SK-N-SH (cell line): ENCODE measurements at regions of chr12 and their contacts with region 1.

Region 1: GRCh38 chr12:70590051-70590450 is 47.2 kb downstream of the PTPRB start:
- DNase-seq: peak; percentile 65
- H3K4me3 ChIP-seq: no peak overlapping the region; a peak in 1 of 4 replicates
- H3K27ac ChIP-seq: no peak overlapping the region
- H3K4me1 ChIP-seq: no peaks in the 10 kb centered on the region
- H3K27me3 ChIP-seq: no peaks in the 10 kb centered on the region
- CTCF ChIP-seq: peak; percentile 93
- EP300 ChIP-seq: no peak
- RAD21 ChIP-seq: peak; percentile 80

Region 2: DNA sequence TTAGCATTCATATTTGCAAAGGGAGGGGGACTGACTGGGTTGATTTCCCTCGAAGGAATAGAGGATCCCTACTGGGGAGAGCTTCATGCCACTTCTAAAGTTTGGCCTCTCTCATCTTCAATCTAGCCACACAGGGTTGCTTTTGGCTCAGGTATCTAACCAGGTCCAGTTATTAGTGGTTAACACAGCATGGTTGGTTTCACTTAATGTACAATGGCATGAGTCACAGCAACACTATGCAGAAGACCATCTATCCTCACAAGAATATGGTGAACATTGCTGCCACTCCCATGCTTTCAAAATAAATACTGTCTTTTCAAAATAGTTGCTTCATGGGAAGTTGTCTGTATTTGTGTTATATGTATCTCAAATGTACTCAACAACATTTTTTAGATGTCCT is 858.0 kb before region 1 on chr12:
- CTCF ChIA-PET with region 1: no interaction called
- POLR2A ChIA-PET with region 1: no interaction called
- DNase-seq: no peak
- H3K4me3 ChIP-seq: no peak overlapping the region
- H3K27ac ChIP-seq: no peak overlapping the region
- H3K4me1 ChIP-seq: no peaks in the 10 kb centered on the region
- H3K27me3 ChIP-seq: no peaks in the 10 kb centered on the region
- CTCF ChIP-seq: no peak
- EP300 ChIP-seq: no peak
- RAD21 ChIP-seq: no peak

Region 3: GRCh38 chr12:70529647-70530046 is 60.4 kb before region 1 on chr12:
- CTCF ChIA-PET with region 1: no interaction called
- POLR2A ChIA-PET with region 1: no interaction called
- DNase-seq: no peak
- H3K4me3 ChIP-seq: no peak overlapping the region
- H3K27ac ChIP-seq: no peak overlapping the region
- H3K4me1 ChIP-seq: no peaks in the 10 kb centered on the region
- H3K27me3 ChIP-seq: no peaks in the 10 kb centered on the region
- CTCF ChIP-seq: no peak
- EP300 ChIP-seq: no peak
- RAD21 ChIP-seq: no peak

Region 4: GRCh38 chr12:70571029-70571428 is 19.0 kb before region 1 on chr12:
- CTCF ChIA-PET with region 1: no interaction called
- POLR2A ChIA-PET with region 1: no interaction called
- DNase-seq: no peak
- H3K4me3 ChIP-seq: no peak overlapping the region
- H3K27ac ChIP-seq: no peak overlapping the region
- H3K4me1 ChIP-seq: no peaks in the 10 kb centered on the region
- H3K27me3 ChIP-seq: no peaks in the 10 kb centered on the region
- CTCF ChIP-seq: no peak
- EP300 ChIP-seq: no peak
- RAD21 ChIP-seq: no peak

Region 5: DNA sequence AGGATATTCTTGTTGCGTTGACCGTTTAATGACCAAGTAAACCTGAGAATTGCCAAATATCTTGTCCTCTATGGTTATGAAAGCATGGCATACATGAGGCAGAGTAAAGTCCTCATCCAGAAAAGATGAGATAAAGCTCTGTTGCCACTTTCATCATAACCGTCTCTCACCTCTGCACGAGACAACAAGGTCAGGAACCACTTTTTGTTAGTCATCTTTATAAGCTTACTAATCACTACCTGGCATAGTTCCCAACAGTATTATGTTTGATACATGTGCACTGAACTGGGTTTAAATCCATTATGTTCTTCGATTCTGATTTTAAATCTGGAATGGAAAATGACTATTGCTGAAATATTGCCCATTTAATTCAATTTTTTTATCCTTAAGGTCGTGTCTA is 15.9 kb after region 1 on chr12:
- CTCF ChIA-PET with region 1: interaction called, 12 read pairs
- POLR2A ChIA-PET with region 1: interaction called, 4 read pairs
- DNase-seq: no peak
- H3K4me3 ChIP-seq: no peak overlapping the region
- H3K27ac ChIP-seq: no peak overlapping the region
- H3K4me1 ChIP-seq: peaks cover 0 to 6% of the 10 kb centered on the region in 2 experiments; a peak in 3 of 4 replicates
- H3K27me3 ChIP-seq: no peaks in the 10 kb centered on the region
- CTCF ChIP-seq: no peak
- EP300 ChIP-seq: no peak
- RAD21 ChIP-seq: no peak

Region 6: DNA sequence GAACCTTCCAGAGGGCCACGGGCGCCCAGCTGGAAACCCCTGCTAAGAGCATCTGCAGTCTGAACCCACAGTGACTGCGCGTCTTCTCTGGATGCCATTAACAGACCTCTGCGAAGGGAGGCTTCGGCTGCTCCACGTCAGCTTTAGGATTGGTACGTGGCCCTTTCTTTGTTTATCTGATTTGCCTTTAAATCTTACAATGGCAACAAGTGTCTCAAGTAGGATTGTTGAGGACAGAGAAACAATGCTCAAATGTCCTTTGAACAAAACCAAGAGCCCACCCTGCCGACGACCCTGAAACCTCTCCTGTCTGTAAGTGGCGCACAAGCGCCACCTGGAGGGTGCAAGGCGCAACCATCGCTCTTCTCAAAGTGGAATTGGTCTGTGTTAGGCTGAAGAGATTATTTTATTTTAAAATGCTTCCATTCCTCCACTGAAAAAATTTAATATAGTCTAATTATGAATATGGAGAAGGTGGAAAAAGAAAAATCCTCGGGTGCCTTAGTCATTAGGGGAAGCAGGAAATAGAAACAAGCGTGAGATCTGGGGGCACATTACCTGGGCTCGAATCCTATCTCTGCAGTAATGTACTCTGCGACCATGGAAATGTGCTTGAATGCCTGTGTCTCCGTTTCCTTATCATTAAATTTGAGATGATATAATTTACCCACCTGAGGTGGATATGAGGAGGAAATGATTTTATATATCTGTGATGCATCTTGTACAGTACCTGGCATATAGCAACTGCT is 129.8 kb after region 1 on chr12:
- CTCF ChIA-PET with region 1: interaction called, 11 read pairs
- POLR2A ChIA-PET with region 1: no interaction called
- DNase-seq: peak; percentile 48
- H3K4me3 ChIP-seq: peak overlapping the region; percentile 9 to 53; a peak in 2 of 4 replicates
- H3K27ac ChIP-seq: no peak overlapping the region
- H3K4me1 ChIP-seq: peaks cover 0 to 2% of the 10 kb centered on the region in 2 experiments; a peak in 2 of 4 replicates
- H3K27me3 ChIP-seq: no peaks in the 10 kb centered on the region
- CTCF ChIP-seq: peak; percentile 99
- EP300 ChIP-seq: no peak
- RAD21 ChIP-seq: peak; percentile 81